GM12878 (cell line): ENCODE measurements at regions of chr6 and their contacts with region 1.

Region 1: DNA sequence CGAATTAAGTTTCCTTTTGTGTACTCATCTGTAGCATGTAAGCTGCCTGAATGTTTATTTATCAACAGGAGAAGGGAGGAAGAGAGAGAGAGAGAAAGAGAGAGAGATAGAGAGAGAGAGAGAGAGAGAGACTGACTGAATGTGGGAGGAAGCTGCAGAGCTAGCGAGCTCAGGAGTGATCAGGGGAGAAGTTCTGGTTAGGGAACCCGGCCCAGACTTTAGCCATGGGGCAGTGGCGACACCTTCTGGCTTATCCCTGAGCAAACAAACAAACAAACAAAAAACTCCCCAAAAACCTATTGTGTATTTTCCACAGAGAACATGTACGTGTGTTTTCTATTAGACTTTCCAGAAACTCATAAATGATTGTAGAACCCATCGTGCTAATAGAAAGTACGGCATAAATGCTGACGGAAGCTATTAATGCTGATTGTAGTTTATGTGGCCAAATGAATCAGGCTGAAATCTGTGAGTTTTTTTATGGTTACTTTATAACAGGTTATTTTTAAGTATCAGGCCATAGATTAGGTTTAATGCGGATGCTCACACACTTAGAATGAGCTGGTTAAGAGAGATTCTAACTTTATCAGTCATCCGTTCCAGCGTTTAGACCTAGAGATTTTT is 92.8 kb downstream of the CLIC5 start:
- DNase-seq: no peak
- ATAC-seq: peak; percentile 77
- H3K4me3 ChIP-seq: no peak overlapping the region
- H3K27ac ChIP-seq: no peak overlapping the region
- H3K4me1 ChIP-seq: peaks cover 23% of the 10 kb centered on the region
- H3K27me3 ChIP-seq: no peaks in the 10 kb centered on the region; a peak in 1 of 4 replicates
- CTCF ChIP-seq: peak; percentile 63 to 81 (median 75)
- EP300 ChIP-seq: no peak
- POLR2A ChIP-seq: no peak
- RAD21 ChIP-seq: peak; percentile 88

Region 2: DNA sequence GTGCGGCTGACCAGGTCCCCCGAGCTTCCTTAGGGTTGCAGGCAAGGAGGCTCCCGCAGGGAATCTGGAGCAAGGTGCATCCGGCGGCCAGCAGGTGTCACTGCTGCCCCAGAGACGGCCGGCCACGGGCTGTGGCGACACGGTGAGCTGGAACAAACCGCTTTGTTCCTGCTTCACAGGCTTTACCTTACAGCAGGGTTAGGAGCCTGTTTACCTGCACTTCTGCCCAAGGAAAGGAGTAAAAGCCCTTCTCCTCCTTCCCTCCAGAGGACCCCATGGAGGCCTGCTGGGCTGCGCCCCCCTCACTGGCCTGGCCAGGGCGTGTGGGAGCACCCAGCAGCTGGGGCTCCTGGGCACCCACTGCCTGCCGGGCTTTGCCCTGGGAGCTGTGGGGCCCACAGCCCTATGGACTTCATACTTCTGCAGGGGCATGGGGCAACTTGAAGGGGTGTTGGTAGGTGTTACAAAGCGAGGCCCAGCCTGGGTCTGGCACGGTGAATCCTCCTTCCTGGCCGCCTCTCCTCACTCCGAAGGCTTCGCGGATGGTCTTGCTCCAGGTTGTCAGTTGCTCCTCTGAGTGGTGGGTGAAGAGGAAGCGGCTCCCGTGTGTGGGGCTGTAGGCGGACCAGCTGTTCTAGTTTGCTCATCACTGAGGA is 1446.9 kb before region 1 on chr6:
- CTCF ChIA-PET with region 1: interaction called, 40 read pairs
- POLR2A ChIA-PET with region 1: no interaction called
- RAD21 ChIA-PET with region 1: interaction called, 19 read pairs
- SMC1A ChIA-PET with region 1: interaction called, 10 read pairs
- in situ Hi-C with region 1: loop called (anchors 5 kb)
- intact Hi-C with region 1: loop called (anchors 2 kb)
- DNase-seq: no peak
- ATAC-seq: peak; percentile 97
- H3K4me3 ChIP-seq: no peak overlapping the region
- H3K27ac ChIP-seq: no peak overlapping the region
- H3K4me1 ChIP-seq: no peaks in the 10 kb centered on the region
- H3K27me3 ChIP-seq: no peaks in the 10 kb centered on the region; a peak in 3 of 4 replicates
- CTCF ChIP-seq: peak; percentile 84 to 95 (median 92)
- EP300 ChIP-seq: no peak
- POLR2A ChIP-seq: no peak
- RAD21 ChIP-seq: peak; percentile 81

Region 3: DNA sequence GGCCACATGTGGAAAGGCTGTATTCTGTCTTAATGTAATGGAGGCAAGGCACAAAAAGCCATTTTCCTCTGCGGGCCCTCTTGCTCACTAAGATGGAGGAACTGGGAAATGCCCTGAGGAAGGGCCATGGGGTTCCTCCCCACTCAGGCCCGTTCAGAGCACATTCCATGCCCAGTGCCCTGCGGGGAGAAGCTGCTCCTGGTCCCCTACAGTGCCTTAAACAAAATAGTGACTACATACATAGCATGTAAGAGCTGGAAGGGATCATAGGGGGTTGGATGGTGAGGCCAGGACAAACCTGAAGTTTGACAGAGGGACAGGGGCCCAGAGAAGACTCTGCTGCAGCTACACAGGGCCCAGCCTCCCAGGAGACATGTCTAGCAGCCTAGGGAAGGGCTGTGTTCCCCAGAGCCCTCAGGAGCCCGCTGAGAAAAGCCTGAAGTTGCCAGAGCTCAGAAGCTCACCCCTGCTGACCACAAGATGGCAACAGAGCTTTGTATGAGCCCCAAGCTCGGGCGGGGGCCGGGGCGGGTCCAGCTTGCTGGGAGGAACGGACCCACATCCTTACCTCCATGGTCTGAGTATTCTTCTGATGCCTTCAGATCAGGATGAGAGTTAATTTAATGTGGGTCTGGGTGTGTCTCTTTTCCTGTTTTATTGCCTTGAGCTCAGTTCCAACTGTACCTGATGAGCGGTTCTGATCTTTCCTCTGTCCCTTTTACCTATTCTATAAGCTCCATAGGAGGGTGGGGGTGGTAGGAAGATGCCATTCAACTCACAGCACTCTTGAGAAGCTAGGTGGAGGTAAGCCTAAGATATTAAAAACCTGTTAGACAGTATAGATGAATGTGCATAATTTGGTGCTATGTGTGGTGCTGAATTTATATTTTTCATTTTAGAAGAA is 1292.5 kb before region 1 on chr6:
- CTCF ChIA-PET with region 1: interaction called, 15 read pairs
- POLR2A ChIA-PET with region 1: no interaction called
- RAD21 ChIA-PET with region 1: interaction called, 16 read pairs
- SMC1A ChIA-PET with region 1: interaction called, 3 read pairs
- in situ Hi-C with region 1: no loop called
- intact Hi-C with region 1: no loop called
- DNase-seq: no peak
- ATAC-seq: peak; percentile 88
- H3K4me3 ChIP-seq: no peak overlapping the region
- H3K27ac ChIP-seq: no peak overlapping the region
- H3K4me1 ChIP-seq: no peaks in the 10 kb centered on the region
- H3K27me3 ChIP-seq: peaks cover 1 to 3% of the 10 kb centered on the region in 2 experiments; a peak in 2 of 4 replicates
- CTCF ChIP-seq: peak; percentile 33 to 59 (median 49); a peak in 5 of 6 replicates
- EP300 ChIP-seq: no peak
- POLR2A ChIP-seq: no peak
- RAD21 ChIP-seq: peak; percentile 36; the same call in 1 of the 2 replicates

Region 4: GRCh38 chr6:45001663-45002062 is 921.2 kb before region 1 on chr6:
- CTCF ChIA-PET with region 1: no interaction called
- POLR2A ChIA-PET with region 1: no interaction called
- RAD21 ChIA-PET with region 1: no interaction called
- SMC1A ChIA-PET with region 1: no interaction called
- in situ Hi-C with region 1: no loop called
- intact Hi-C with region 1: loop called (anchors 10 kb)
- DNase-seq: peak; percentile 52
- ATAC-seq: peak; percentile 100
- H3K4me3 ChIP-seq: no peak overlapping the region
- H3K27ac ChIP-seq: no peak overlapping the region
- H3K4me1 ChIP-seq: peaks cover 12% of the 10 kb centered on the region; the same call in 1 of the 2 replicates
- H3K27me3 ChIP-seq: no peaks in the 10 kb centered on the region
- CTCF ChIP-seq: no peak
- EP300 ChIP-seq: no peak
- POLR2A ChIP-seq: no peak
- RAD21 ChIP-seq: no peak

Region 5: DNA sequence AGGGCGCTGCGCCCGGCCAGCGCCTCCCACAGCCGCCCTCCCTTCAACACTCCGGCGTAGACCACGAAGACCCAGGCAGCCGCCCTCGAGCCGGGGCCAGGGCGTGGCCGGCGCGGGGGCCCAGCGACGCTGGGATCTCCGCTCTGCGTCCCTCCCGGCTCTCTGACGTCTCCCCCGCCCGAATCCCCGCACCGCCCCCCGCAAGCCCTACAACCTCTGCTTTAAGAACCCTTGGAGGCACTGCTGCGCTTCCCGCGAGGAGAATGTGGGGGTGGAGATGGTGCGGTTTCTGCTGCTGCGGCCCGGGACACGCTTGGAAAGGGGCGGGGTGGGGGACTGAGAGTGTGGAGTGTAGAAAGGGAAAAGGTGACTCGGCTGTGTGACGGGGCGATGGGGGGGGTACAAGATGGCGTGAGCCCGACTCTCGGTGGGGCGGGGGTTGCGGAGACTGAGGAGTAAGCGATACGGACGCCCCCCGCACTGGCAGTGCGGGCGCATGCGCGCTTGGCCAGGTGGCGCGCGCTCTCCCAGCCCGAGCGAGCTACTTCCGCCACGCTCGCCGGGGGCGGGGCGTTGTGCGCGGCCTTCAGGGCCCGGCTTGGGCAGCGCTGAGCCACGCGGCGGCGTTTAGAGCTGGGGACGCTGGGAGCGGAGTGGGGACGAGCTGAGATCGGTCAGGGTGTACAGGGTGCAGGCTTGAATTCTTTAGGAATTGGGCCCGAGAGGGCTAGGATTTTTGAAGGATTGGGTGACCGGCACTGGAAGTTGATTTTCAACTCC is 545.1 kb before region 1 on chr6 and contains the start of gene SUPT3H:
- CTCF ChIA-PET with region 1: interaction called, 4 read pairs
- POLR2A ChIA-PET with region 1: no interaction called
- RAD21 ChIA-PET with region 1: interaction called, 10 read pairs
- SMC1A ChIA-PET with region 1: no interaction called
- in situ Hi-C with region 1: no loop called
- intact Hi-C with region 1: loop called (anchors 5 kb)
- DNase-seq: peak; percentile 56
- ATAC-seq: peak; percentile 95
- H3K4me3 ChIP-seq: peak within 1 kb of the TSS; percentile 69
- H3K27ac ChIP-seq: peak within 1 kb of the TSS; percentile 80
- H3K4me1 ChIP-seq: no peaks in the 10 kb centered on the region; the same call in 1 of the 2 replicates
- H3K27me3 ChIP-seq: peaks cover 0 to 2% of the 10 kb centered on the region in 2 experiments; a peak in 1 of 4 replicates
- CTCF ChIP-seq: peak in 1 of 3 experiments; percentile 27; a peak in 1 of 6 replicates
- EP300 ChIP-seq: 0 out of 4 replicates have a peak, but pooled peaks of 1 of the 2 experiments have one; percentile 7
- POLR2A ChIP-seq: peak; percentile 79
- RAD21 ChIP-seq: no peak
- polyA plus RNA-seq, gene SUPT3H: 2.8 TPM

Region 6: DNA sequence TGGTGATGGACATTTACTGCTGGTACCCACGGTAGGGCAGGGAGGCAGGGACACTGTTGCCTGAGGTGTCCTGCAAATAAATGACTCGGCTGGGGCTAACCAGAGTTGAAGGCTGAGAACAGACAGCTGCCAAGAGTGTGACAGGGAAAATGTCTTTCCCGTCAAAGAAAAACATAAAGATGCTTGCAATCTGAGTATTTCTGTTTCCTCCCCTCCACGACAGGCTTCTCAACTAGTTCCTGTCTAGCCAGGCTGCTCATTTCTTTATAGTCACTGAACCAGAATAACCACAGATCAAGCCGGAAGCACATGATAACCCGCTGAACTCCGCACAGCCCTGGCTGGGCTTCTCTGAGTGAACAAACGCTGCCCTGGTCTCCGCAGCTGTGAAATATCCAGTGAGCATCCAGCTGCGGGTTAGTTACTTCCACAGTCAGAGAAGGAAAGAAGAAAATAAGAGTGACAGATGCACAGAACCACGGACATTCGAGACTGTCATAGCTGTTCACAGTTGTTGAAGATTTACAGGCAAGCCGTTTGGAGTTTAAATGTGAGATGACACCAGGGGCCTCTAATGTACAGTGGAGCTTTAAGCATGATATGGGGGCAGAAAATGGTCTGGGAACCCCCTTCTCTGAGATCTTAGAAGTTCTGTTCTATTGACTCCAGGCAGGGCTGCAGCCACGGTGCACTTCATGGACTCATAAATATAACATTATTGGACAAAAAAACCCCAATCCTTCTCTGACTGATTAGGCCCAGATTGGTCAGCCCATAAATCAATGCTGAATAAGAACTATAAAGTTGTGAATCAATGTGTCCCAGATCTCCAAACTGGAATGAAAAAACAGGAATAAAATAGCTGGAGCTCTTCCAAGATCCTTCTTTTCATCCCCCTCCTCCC is 245.2 kb before region 1 on chr6:
- CTCF ChIA-PET with region 1: interaction called, 3 read pairs
- POLR2A ChIA-PET with region 1: no interaction called
- RAD21 ChIA-PET with region 1: no interaction called
- SMC1A ChIA-PET with region 1: interaction called, 5 read pairs
- in situ Hi-C with region 1: no loop called
- intact Hi-C with region 1: loop called (anchors 10 kb)
- DNase-seq: peak; percentile 30
- ATAC-seq: peak; percentile 79
- H3K4me3 ChIP-seq: peak overlapping the region; percentile 9; the same call in 1 of the 2 replicates
- H3K27ac ChIP-seq: no peak overlapping the region
- H3K4me1 ChIP-seq: peaks cover 19% of the 10 kb centered on the region
- H3K27me3 ChIP-seq: no peaks in the 10 kb centered on the region; a peak in 2 of 4 replicates
- CTCF ChIP-seq: no peak
- EP300 ChIP-seq: peak; percentile 25 to 40; a peak in 1 of 4 replicates
- POLR2A ChIP-seq: no peak
- RAD21 ChIP-seq: no peak

Region 7: DNA sequence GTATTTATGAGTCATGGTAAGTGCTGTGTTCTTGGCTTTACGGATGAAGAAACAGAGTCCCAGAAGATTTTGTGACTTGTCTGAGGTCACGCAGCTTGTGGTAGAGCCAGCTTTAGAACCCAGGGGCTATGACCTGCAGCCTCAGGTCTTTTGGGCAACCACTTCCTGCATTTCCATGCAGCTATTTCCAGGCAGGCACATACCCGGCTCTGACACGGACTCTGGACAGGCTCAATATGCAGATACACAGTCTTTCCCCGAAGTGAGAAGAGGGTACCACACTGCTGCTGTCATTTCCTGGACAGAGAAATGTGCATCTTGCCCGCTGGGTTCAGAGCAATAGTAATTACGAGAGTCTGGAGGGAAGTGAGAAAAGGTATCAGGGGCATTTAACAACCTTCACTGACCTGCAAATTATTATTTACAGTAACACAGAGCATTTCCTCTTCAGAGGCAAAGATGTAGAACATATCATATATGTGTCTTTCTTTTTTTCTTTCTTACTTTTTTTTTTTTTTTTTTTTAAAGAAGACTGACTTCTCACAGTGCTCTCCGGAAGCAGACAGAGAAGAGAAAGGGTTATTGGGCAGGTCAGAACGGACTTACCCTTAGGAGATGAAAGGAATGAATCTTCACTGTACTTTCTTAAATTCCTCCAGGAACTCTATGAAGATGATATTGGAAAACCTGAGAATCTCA is 92.2 kb before region 1 on chr6:
- CTCF ChIA-PET with region 1: interaction called, 5 read pairs
- POLR2A ChIA-PET with region 1: no interaction called
- RAD21 ChIA-PET with region 1: interaction called, 8 read pairs
- SMC1A ChIA-PET with region 1: no interaction called
- in situ Hi-C with region 1: no loop called
- intact Hi-C with region 1: loop called (anchors 1 kb)
- DNase-seq: peak; percentile 86
- ATAC-seq: peak; percentile 95
- H3K4me3 ChIP-seq: peak overlapping the region; percentile 26; the same call in 1 of the 2 replicates
- H3K27ac ChIP-seq: 0 out of 2 replicates have a peak overlapping the region, but pooled peaks have one; percentile 11
- H3K4me1 ChIP-seq: peaks cover 24% of the 10 kb centered on the region
- H3K27me3 ChIP-seq: no peaks in the 10 kb centered on the region; a peak in 1 of 4 replicates
- CTCF ChIP-seq: no peak
- EP300 ChIP-seq: peak; percentile 83 to 97; a peak in 3 of 4 replicates
- POLR2A ChIP-seq: no peak
- RAD21 ChIP-seq: no peak